Psoas muscle (tissue), 8 donors: ENCODE measurements at regions of chr11 and their contacts with region 1.

Region 1: DNA sequence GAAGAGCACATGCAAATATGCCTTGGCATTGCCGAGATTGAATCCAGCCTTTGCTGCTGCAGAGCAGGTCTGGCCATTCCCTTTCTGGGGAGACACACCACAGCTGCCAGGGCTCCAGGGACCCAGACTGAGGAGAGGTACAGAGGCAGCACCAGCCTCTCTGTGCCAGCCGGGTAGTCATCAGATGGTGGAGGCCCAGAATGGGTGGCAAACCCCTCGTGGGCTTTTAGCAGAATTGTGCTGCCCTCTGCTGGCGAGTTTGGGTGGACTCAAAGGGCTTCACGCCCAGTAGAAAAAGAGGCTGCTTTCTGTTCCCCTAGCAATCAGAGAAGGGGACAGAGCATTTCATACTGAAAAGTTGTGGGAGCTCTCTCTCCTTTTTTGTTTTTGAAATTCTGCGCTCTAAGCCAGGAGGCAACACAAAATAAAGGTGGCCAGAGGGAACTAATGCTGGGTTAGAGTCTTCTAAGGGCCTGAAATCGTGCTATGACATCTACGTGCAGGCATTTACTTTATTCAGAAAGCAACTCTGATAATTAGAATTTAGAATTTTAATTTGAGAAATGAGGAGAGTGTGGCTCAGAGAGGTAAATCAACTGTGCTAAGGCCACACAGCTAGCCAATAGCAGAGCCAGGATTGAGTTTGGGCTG is 158.8 kb upstream of the NAV2 start:
- DNase-seq: peak; percentile 73 to 88
- ATAC-seq: peak; percentile 79 to 92 (median 82)
- H3K4me3 ChIP-seq: no peak overlapping the region
- H3K27ac ChIP-seq: no peak overlapping the region
- H3K4me1 ChIP-seq: no peaks in the 10 kb centered on the region
- H3K27me3 ChIP-seq: no peaks in the 10 kb centered on the region
- CTCF ChIP-seq: peak; percentile 89

Region 2: DNA sequence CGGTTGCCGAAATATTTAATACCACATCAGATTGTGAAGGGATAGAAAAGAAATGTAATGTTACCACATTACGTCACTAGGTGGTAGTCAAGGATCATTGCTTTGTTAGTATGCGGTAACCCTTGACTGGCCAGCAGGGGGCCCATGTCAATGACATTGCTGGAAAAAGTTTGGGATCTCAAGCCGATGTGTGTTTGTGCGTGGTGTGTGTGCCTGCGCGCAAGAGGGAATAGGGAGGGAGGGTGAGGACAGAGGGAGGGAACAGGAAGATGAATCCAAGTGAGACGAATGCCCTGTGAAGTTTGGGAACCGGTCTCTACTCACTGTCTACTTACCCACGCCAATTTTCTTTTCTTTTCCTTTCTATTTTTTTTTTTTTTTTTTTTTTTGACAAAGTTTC is 482.6 kb before region 1 on chr11:
- intact Hi-C with region 1: loop called (anchors 1 to 2 kb)
- DNase-seq: peak; percentile 65 to 77
- ATAC-seq: peak; percentile 88 to 97 (median 94)
- H3K4me3 ChIP-seq: no peak overlapping the region
- H3K27ac ChIP-seq: no peak overlapping the region
- H3K4me1 ChIP-seq: no peaks in the 10 kb centered on the region
- H3K27me3 ChIP-seq: no peaks in the 10 kb centered on the region
- CTCF ChIP-seq: peak; percentile 90

Region 3: GRCh38 chr11:19160847-19161246 is 393.0 kb before region 1 on chr11:
- intact Hi-C with region 1: loop called (anchors 5 kb)
- DNase-seq: no peak
- ATAC-seq: peak in 2 of 4 donors; percentile 53 to 60
- H3K4me3 ChIP-seq: no peak overlapping the region
- H3K27ac ChIP-seq: no peak overlapping the region
- H3K4me1 ChIP-seq: no peaks in the 10 kb centered on the region
- H3K27me3 ChIP-seq: no peaks in the 10 kb centered on the region
- CTCF ChIP-seq: peak; percentile 31

Region 4: GRCh38 chr11:19259487-19260345 is 294.1 kb before region 1 on chr11:
- intact Hi-C with region 1: loop called (anchors 2 to 5 kb)
- DNase-seq: peak; percentile 68 to 80
- ATAC-seq: peak; percentile 63 to 90 (median 80)
- H3K4me3 ChIP-seq: peak overlapping the region; percentile 7
- H3K27ac ChIP-seq: no peak overlapping the region
- H3K4me1 ChIP-seq: no peaks in the 10 kb centered on the region
- H3K27me3 ChIP-seq: no peaks in the 10 kb centered on the region
- CTCF ChIP-seq: peak; percentile 94

Region 5: GRCh38 chr11:19311308-19312030 is 242.3 kb before region 1 on chr11:
- intact Hi-C with region 1: loop called (anchors 1 to 5 kb)
- DNase-seq: peak; percentile 62 to 63
- ATAC-seq: peak; percentile 65 to 83 (median 82)
- H3K4me3 ChIP-seq: no peak overlapping the region
- H3K27ac ChIP-seq: no peak overlapping the region
- H3K4me1 ChIP-seq: no peaks in the 10 kb centered on the region
- H3K27me3 ChIP-seq: no peaks in the 10 kb centered on the region
- CTCF ChIP-seq: peak; percentile 74

Region 6: GRCh38 chr11:19903620-19904069 is 349.8 kb after region 1 on chr11:
- intact Hi-C with region 1: loop called in 1 of 2 experiments (anchors 2 kb)
- DNase-seq: peak; percentile 50 to 72
- ATAC-seq: peak; percentile 82 to 94 (median 84)
- H3K4me3 ChIP-seq: no peak overlapping the region
- H3K27ac ChIP-seq: no peak overlapping the region
- H3K4me1 ChIP-seq: no peaks in the 10 kb centered on the region
- H3K27me3 ChIP-seq: no peaks in the 10 kb centered on the region
- CTCF ChIP-seq: peak; percentile 87